Psoas muscle (tissue), 8 donors: ENCODE measurements at regions of chr1 and their contacts with region 1.

Region 1: DNA sequence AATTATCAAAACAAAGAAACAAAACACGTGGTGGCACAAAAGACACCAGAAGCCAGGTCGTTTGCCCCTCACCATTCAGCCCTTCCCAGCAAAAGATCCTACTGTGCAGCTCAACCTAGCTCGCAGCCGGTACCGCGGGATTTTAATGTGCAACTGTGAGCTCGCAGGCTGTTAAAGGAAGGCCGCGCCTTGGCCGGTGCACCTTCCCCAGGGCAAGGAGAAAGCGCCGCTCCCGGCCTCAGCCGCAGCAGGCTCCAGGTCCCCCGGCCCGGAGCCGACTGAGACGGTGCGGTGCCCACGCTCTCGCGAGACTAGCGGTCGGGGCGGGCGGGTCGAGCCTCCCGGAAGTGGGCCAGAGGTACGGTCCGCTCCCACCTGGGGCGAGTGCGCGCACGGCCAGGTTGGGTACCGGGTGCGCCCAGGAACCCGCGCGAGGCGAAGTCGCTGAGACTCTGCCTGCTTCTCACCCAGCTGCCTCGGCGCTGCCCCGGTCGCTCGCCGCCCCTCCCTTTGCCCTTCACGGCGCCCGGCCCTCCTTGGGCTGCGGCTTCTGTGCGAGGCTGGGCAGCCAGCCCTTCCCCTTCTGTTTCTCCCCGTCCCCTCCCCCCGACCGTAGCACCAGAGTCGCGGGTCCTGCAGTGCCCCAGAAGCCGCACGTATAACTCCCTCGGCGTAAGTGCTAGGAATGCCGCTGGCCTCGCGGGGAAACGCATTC is at the start of gene AGL:
- DNase-seq: peak; percentile 89 to 93
- ATAC-seq: peak; percentile 88 to 95 (median 91)
- H3K4me3 ChIP-seq: peak within 1 kb of the TSS; percentile 87
- H3K27ac ChIP-seq: peak within 1 kb of the TSS; percentile 95
- H3K4me1 ChIP-seq: peaks cover 41% of the 10 kb centered on the region
- H3K27me3 ChIP-seq: no peaks in the 10 kb centered on the region
- CTCF ChIP-seq: no peak
- total RNA-seq, gene AGL: 110 to 159 (median 116) TPM

Region 2: GRCh38 chr1:99573431-99574217 is 276.3 kb before region 1 on chr1:
- intact Hi-C with region 1: no loop called
- DNase-seq: no peak
- ATAC-seq: no peak
- H3K4me3 ChIP-seq: no peak overlapping the region
- H3K27ac ChIP-seq: no peak overlapping the region
- H3K4me1 ChIP-seq: no peaks in the 10 kb centered on the region
- H3K27me3 ChIP-seq: no peaks in the 10 kb centered on the region
- CTCF ChIP-seq: no peak

Region 3: GRCh38 chr1:99662581-99663208 is 187.2 kb before region 1 on chr1:
- intact Hi-C with region 1: loop called in 1 of 2 experiments (anchors 10 kb)
- DNase-seq: peak; percentile 84 to 88
- ATAC-seq: peak; percentile 36 to 83 (median 79)
- H3K4me3 ChIP-seq: peak overlapping the region; percentile 28
- H3K27ac ChIP-seq: peak overlapping the region; percentile 92
- H3K4me1 ChIP-seq: peaks cover 87% of the 10 kb centered on the region
- H3K27me3 ChIP-seq: no peaks in the 10 kb centered on the region
- CTCF ChIP-seq: no peak

Region 4: DNA sequence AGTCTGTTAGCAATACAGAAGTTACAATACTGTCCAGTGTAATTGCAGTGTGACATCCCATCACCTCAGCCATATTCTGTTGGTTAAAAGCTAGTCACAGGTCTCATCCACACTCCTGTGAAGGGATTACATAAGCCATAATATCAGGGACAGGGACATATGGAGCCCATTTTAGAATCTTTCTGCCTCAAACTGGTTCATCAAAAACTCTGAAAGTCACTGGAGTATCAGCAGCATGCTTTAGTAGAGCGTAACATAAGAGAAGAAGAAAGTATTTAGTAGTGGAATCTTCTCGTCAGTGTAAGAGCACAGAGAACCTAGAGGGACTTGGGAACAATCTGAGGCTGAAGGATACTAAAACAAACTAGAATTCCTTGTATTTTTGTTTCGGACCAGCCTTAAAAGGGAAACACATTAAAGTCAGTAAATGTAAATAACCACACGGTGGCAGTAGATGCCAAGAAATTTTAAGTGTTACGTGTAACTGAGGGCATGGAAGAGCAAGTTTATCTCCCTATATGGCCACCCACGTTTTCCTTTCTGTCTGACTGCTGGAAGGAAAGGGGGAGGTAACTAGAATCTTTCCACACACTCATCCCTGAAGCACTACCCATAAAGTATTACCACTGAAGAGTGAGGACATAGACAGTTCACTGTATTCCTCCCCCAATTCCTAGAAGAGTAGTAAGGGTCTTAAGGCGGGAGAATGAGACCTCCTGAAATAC is 41.3 kb before region 1 on chr1:
- intact Hi-C with region 1: loop called in 1 of 2 experiments (anchors 2 kb)
- DNase-seq: no peak
- ATAC-seq: peak; percentile 93 to 97 (median 94)
- H3K4me3 ChIP-seq: peak overlapping the region; percentile 46
- H3K27ac ChIP-seq: peak overlapping the region; percentile 76
- H3K4me1 ChIP-seq: peaks cover 9% of the 10 kb centered on the region
- H3K27me3 ChIP-seq: peaks cover 0 to 7% (median 6%) of the 10 kb centered on the region in 3 donors
- CTCF ChIP-seq: peak; percentile 68

Region 5: GRCh38 chr1:99818063-99818699 is 31.7 kb before region 1 on chr1:
- intact Hi-C with region 1: loop called in 1 of 2 experiments (anchors 5 kb)
- DNase-seq: no peak
- ATAC-seq: peak; percentile 91 to 95 (median 94)
- H3K4me3 ChIP-seq: no peak overlapping the region
- H3K27ac ChIP-seq: peak overlapping the region; percentile 78
- H3K4me1 ChIP-seq: peaks cover 29% of the 10 kb centered on the region
- H3K27me3 ChIP-seq: no peaks in the 10 kb centered on the region
- CTCF ChIP-seq: no peak

Region 6: GRCh38 chr1:99886841-99887240 is 36.9 kb after region 1 on chr1:
- intact Hi-C with region 1: no loop called
- DNase-seq: no peak
- ATAC-seq: no peak
- H3K4me3 ChIP-seq: no peak overlapping the region
- H3K27ac ChIP-seq: no peak overlapping the region
- H3K4me1 ChIP-seq: no peaks in the 10 kb centered on the region
- H3K27me3 ChIP-seq: no peaks in the 10 kb centered on the region
- CTCF ChIP-seq: no peak